Heart left ventricle (tissue), 16 donors: ENCODE measurements at regions of chr16 and their contacts with region 1.

Region 1: DNA sequence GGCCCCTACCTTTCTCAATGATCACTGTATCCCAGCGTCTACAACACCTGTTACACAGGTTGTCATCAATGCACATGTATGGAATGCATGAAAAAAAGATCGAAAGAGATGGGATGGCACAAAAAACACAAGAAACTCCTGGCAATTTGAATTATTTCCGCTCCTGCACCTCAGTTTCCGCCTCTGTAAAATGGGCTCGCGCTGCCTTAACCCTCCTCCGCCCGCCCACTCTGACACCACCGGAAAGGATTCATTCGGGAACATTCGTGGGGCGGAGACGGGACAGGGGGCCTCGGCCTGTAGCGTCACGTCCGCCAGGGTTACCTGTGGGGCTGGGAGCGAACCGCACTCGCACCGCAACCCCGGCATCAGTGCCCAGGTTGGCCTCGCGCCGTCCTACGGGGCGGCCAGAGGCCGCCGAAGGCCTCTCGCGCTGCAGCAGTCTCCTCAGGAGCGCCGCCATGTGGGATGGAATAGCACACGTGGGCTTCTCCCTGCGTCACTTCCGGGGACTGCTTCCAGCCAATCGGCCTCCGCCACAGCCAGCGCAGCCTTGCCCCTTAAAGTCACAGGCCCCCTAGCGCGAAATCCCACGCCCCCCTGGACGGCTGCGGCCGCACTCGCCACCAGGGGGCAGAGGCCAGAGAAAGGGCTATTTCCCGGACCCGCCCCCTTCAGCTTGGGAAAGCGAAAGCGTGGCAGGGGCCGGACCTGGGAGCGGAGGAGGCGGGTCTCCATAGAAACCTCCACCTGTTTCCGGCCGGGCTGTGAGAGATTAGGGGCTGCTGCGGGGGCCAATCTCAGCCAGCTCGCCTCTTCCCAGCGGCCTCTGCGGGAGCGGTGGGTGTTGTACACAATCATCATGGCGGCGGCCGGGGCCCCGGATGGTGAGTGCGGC is at the starts of genes EARS2 and UBFD1:
- DNase-seq: peak; percentile 98 to 99 (median 99)
- ATAC-seq: peak; percentile 96 to 98 (median 98)
- H3K4me3 ChIP-seq: peak within 1 kb of the TSS; percentile 72 to 99 (median 96)
- H3K27ac ChIP-seq: peak within 1 kb of the TSS; percentile 76 to 95 (median 90)
- H3K4me1 ChIP-seq: peaks cover 9 to 38% (median 25%) of the 10 kb centered on the region in 12 donors
- H3K27me3 ChIP-seq: no peaks in the 10 kb centered on the region
- CTCF ChIP-seq: peak; percentile 91 to 100 (median 96)
- POLR2A ChIP-seq: peak in 1 of 2 donors; percentile 62
- total RNA-seq, gene EARS2: 12.2 to 37.0 (median 21.5) TPM
- total RNA-seq, gene UBFD1: 42.0 to 116 (median 57.7) TPM

Region 2: DNA sequence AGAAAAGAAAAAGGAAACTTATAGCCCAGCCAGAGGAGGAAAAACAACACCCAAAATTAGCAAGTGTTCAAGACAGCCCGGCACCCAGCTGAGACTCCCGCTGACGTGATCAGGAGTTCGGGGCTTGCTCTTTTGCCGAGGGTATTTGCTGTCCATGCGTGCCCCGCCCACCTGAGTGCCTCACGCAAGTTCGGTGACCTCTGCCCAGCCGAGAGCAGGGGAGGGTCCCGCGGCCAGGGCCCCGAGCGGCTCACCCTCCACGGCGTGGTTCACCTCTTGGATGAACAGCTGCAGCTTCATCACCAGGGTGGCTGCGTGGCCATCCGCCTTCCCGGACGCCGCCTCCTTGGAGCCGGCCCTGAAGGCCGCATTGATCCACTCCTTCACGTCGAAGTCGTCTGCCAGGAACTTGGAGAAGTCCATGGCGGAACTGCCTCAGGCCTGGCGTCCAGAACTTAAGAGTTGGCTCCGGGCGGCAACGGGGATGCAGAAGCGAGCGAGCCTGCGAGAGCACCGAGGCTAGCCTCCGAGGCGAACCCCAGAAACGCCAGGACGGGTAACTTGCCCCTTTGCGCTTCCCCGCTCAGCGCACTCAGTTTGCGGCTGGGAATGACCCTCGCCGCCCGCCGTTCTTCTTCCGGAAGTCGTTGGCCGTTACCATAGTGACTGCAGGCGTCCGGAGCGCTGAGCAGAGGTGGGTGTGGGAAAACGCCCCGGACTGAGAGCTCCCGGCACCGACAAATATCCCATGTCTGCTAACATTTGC is 104.4 kb before region 1 on chr16 and contains the start of gene COG7:
- intact Hi-C with region 1: loop called in 2 of 10 experiments (anchors 1 to 5 kb)
- DNase-seq: peak; percentile 90 to 93 (median 91)
- ATAC-seq: peak; percentile 93 to 97 (median 97)
- H3K4me3 ChIP-seq: peak within 1 kb of the TSS; percentile 64 to 97 (median 83)
- H3K27ac ChIP-seq: peak within 1 kb of the TSS; percentile 67 to 95 (median 85)
- H3K4me1 ChIP-seq: peaks cover 5 to 34% (median 19%) of the 10 kb centered on the region in 12 donors
- H3K27me3 ChIP-seq: no peaks in the 10 kb centered on the region
- CTCF ChIP-seq: no peak
- POLR2A ChIP-seq: no peak
- total RNA-seq, gene COG7: 7.8 to 16.8 (median 12.2) TPM

Region 3: DNA sequence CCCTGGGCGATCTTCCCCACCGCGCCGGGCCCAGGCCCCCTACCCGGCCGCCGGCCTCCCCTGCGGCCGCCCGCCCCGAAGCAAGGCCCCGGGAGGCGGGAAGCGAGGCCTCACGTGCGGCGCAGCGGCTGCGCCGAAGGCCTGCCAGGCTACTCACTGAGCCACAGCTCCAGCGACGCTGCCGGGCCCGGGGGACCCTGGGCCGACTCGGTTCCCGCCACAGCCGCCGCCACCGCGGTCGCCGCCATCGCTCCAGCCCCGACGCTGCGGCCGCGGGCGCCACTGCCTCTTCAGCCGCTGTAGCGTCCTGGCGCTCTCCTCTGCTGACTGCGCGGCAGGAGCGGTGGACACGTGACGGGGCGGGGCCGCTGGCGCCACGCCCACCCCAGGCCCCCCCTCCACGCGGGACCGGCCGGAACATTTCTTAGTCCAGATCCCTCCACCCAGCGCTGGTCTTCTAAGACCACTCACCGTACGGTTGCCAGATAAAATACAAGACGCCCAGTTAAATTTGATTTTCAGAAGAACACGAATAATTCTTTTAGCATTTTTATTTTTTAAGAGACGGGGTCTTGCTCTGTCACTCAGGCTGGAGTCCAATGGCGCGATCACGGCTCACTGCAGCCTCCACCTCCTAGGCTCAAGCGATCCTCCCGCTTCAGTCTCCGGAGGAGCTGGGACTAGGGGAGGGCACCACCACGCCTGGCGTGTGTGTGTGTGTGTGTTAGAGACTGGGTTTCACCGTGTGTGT is 46.8 kb before region 1 on chr16 and contains the start of gene GGA2:
- intact Hi-C with region 1: loop called in 3 of 10 experiments (anchors 2 to 5 kb)
- DNase-seq: peak; percentile 86 to 92 (median 89)
- ATAC-seq: peak; percentile 89 to 95 (median 93)
- H3K4me3 ChIP-seq: peak within 1 kb of the TSS; percentile 65 to 98 (median 78)
- H3K27ac ChIP-seq: peak within 1 kb of the TSS; percentile 27 to 92 (median 85)
- H3K4me1 ChIP-seq: peaks cover 0 to 40% (median 12%) of the 10 kb centered on the region in 12 donors
- H3K27me3 ChIP-seq: no peaks in the 10 kb centered on the region
- CTCF ChIP-seq: peak in 4 of 12 donors; percentile 9 to 31 (median 20)
- POLR2A ChIP-seq: peak; percentile 74 to 93
- total RNA-seq, gene GGA2: 30.8 to 73.8 (median 47.5) TPM

Region 4: GRCh38 chr16:23595951-23596720 is 39.0 kb after region 1 on chr16 and contains the start of gene NDUFAB1:
- intact Hi-C with region 1: loop called in 9 of 10 experiments (anchors 1 to 5 kb)
- DNase-seq: peak; percentile 90 to 95 (median 93)
- ATAC-seq: peak; percentile 93 to 97 (median 96)
- H3K4me3 ChIP-seq: peak within 1 kb of the TSS; percentile 67 to 100 (median 93)
- H3K27ac ChIP-seq: peak within 1 kb of the TSS; percentile 82 to 97 (median 88)
- H3K4me1 ChIP-seq: peaks cover 2 to 47% (median 25%) of the 10 kb centered on the region in 12 donors
- H3K27me3 ChIP-seq: no peaks in the 10 kb centered on the region
- CTCF ChIP-seq: peak; percentile 99 to 100 (median 100)
- POLR2A ChIP-seq: peak in 1 of 2 donors; percentile 55
- total RNA-seq, gene NDUFAB1: 298 to 896 (median 409) TPM

Region 5: DNA sequence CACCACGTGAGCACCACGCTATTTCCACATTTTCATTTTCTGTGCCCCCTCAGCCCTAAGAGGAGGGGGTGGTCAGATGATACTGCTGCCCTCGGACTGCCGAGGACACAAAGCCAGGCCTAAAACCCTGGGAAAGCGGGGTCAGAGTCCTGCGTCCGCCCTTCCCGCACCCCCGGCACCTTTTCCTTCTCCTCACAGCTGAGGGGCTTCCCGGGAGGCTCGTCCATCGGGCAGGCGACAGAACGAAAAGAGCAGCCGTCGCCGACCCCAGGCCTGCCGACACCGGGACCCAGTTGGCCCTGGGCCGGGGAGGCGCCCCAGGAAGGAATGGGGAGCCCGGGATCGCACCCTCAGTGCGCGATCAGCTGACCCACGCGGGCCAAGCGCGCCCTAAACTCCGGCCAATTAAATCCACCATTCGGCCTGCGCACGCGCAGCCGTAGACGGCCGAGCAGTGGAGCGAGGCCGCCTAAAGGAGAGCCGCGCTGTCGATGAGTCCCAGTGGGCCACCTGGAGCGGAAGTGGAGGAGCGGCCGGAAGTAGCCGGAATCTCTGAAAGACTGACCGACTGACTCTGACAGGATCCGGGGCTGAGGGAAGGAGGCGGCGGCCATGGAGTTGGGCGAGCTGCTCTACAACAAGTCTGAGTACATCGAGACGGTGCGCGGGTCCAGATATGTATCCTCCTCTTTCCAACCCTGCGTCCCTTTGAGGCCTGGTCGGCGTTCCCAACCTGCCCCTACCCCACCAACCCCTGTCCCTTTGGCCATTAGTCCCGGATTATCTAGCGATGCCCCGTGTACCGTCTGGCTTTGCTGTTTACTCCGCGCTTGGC is 84.0 kb after region 1 on chr16 and contains the starts of genes DCTN5 and PALB2:
- intact Hi-C with region 1: loop called in 1 of 10 experiments (anchors 5 kb)
- DNase-seq: peak; percentile 93 to 96 (median 96)
- ATAC-seq: peak; percentile 99 to 100 (median 100)
- H3K4me3 ChIP-seq: peak within 1 kb of the TSS; percentile 67 to 99 (median 88)
- H3K27ac ChIP-seq: peak within 1 kb of the TSS; percentile 64 to 89 (median 83)
- H3K4me1 ChIP-seq: peaks cover 0 to 31% (median 20%) of the 10 kb centered on the region in 12 donors
- H3K27me3 ChIP-seq: no peaks in the 10 kb centered on the region
- CTCF ChIP-seq: peak in 1 of 12 donors; percentile 12
- POLR2A ChIP-seq: peak in 1 of 2 donors; percentile 70
- total RNA-seq, gene DCTN5: 26.8 to 56.0 (median 40.5) TPM
- total RNA-seq, gene PALB2: 3.8 to 7.4 (median 4.5) TPM